Prostate gland (tissue), 2 donors: ENCODE measurements at regions of chr19 and their contacts with region 1.

Region 1: GRCh38 chr19:11293433-11294389 is 2.2 kb upstream of the TSPAN16 start:
- DNase-seq: peak; percentile 93
- H3K4me3 ChIP-seq: no peak overlapping the region
- H3K27ac ChIP-seq: peak overlapping the region in 1 of 2 donors; percentile 33
- H3K4me1 ChIP-seq: no peaks in the 10 kb centered on the region
- H3K27me3 ChIP-seq: no peaks in the 10 kb centered on the region
- CTCF ChIP-seq: peak; percentile 90 to 99 (median 96)
- POLR2A ChIP-seq: peak; percentile 23

Region 2: GRCh38 chr19:10864538-10864899 is 429.2 kb before region 1 on chr19:
- intact Hi-C with region 1: no loop called
- DNase-seq: peak; percentile 83
- H3K4me3 ChIP-seq: no peak overlapping the region
- H3K27ac ChIP-seq: peak overlapping the region in 1 of 2 donors; percentile 70
- H3K4me1 ChIP-seq: no peaks in the 10 kb centered on the region
- H3K27me3 ChIP-seq: no peaks in the 10 kb centered on the region
- CTCF ChIP-seq: peak; percentile 79 to 88 (median 86)
- POLR2A ChIP-seq: no peak

Region 3: GRCh38 chr19:11374433-11375142 is 80.9 kb after region 1 on chr19 and contains the start of gene SWSAP1:
- intact Hi-C with region 1: loop called (anchors 2 kb)
- DNase-seq: peak; percentile 99
- H3K4me3 ChIP-seq: peak within 1 kb of the TSS; percentile 46 to 58
- H3K27ac ChIP-seq: peak within 1 kb of the TSS; percentile 93 to 94
- H3K4me1 ChIP-seq: peaks cover 9% of the 10 kb centered on the region
- H3K27me3 ChIP-seq: no peaks in the 10 kb centered on the region
- CTCF ChIP-seq: no peak
- POLR2A ChIP-seq: no peak
- total RNA-seq, gene SWSAP1: 4.1 to 6.3 TPM

Region 4: DNA sequence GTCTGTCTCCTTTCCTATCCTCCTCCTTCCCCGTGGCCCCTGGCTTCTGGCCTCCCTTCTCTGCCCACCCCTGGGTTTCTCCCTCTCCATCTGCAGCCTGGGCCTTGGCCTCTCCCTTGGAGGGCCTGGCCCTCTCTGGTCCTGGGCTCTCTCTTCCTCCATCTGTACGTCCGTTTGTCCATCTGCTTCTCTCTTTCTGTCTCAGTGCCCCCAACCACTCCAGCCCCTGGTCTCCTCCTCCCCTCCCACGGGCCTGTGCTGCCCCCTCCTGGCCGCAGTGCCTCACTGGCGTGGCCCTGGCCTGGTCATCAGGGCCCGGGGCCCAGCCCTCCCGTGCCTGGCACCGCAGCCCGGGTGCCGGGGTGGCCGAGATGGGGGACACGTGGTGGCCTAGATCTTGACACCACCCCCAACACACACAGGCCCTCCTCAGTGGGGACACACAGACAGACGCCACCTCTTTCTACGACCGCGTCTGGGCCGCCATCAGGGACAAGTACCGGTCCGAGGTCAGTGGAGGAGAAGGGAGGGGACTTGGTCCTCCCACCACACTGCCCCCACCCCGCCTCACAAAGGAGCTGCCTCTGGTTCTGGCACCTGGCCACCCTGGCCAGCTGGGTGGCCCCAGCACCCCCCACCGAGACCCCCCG is 153.1 kb after region 1 on chr19:
- intact Hi-C with region 1: loop called (anchors 5 kb)
- DNase-seq: no peak
- H3K4me3 ChIP-seq: no peak overlapping the region
- H3K27ac ChIP-seq: no peak overlapping the region
- H3K4me1 ChIP-seq: no peaks in the 10 kb centered on the region
- H3K27me3 ChIP-seq: no peaks in the 10 kb centered on the region
- CTCF ChIP-seq: peak; percentile 50 to 85 (median 66)
- POLR2A ChIP-seq: no peak

Region 5: DNA sequence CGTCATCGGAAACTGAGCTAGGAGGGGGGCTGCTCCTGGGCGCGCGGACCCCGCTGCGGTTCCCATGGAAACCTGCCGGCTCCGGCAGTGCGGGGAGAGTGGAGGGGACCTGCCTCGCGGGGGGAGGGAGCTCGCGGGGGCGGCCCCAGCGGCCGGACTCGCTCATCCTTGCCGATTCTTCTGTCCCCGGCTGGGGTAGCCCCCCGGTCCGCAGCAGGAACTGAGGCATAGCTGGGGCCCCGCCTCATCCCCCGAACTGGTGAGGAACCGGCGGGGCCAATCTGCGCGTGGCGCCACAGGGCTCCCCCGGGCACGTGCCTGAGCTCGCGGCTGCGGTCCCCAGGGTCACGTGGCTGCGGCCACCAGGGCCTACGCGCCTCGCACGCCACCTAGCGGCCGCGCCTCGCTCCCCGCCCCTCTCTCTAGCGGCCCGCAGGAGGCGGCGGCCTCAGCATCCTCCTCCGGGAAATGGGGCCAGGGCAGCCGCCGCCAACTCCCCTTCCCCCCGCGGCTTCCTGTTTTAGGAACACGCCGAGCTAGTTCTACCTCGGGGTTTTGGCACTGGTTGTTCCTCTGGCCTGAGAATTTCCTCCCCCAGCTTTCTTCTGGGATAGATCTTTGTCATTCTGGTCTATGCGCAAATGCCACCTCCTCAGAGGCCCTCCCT is 188.8 kb after region 1 on chr19:
- intact Hi-C with region 1: loop called (anchors 5 kb)
- DNase-seq: peak; percentile 58
- H3K4me3 ChIP-seq: peak overlapping the region in 1 of 2 donors; percentile 13
- H3K27ac ChIP-seq: no peak overlapping the region
- H3K4me1 ChIP-seq: no peaks in the 10 kb centered on the region
- H3K27me3 ChIP-seq: peaks cover 26% of the 10 kb centered on the region
- CTCF ChIP-seq: peak; percentile 89 to 98 (median 94)
- POLR2A ChIP-seq: peak; percentile 25

Region 6: DNA sequence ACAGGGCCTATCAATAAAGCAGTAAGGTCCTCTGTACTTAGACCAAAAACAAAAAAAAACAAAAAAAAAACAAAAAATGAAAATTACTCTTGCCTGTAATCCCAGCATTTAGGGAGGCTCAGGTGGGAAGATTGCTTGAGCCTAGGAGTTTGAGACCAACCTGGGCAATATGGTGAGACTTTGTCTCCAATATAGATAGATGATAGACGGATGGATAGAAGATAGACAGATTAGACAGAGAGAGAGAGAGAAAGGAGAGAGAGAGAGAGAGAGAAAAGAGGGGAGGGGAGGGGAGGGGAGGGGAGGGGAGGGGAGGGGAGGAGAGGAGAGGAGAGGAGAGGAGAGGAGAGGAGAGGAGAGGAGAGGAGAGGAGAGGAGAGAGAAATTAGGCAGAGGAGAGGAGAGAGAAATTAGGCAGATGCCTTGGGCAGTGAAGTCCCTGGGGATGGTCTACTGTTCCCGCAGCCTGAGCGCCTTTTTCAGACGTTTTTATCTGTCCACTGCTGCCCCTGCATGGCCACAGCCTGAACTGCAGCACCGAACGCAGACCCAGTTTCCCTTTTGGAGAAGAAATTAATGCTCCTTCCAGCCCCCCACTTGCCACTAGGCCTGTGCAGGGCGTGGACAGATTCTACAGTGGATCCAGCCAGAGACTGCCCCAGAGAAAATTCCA is 293.7 kb after region 1 on chr19:
- intact Hi-C with region 1: loop called (anchors 10 kb)
- DNase-seq: peak; percentile 59
- H3K4me3 ChIP-seq: no peak overlapping the region
- H3K27ac ChIP-seq: no peak overlapping the region
- H3K4me1 ChIP-seq: no peaks in the 10 kb centered on the region
- H3K27me3 ChIP-seq: no peaks in the 10 kb centered on the region
- CTCF ChIP-seq: peak; percentile 53 to 95 (median 84)
- POLR2A ChIP-seq: no peak